GM18951 (cell line): ENCODE measurements at regions of chr15 and their contacts with region 1.

Region 1: GRCh38 chr15:52466134-52466701 is 62.5 kb downstream of the MYO5A start:
- POLR2A ChIP-seq: peak; percentile 48

Region 2: DNA sequence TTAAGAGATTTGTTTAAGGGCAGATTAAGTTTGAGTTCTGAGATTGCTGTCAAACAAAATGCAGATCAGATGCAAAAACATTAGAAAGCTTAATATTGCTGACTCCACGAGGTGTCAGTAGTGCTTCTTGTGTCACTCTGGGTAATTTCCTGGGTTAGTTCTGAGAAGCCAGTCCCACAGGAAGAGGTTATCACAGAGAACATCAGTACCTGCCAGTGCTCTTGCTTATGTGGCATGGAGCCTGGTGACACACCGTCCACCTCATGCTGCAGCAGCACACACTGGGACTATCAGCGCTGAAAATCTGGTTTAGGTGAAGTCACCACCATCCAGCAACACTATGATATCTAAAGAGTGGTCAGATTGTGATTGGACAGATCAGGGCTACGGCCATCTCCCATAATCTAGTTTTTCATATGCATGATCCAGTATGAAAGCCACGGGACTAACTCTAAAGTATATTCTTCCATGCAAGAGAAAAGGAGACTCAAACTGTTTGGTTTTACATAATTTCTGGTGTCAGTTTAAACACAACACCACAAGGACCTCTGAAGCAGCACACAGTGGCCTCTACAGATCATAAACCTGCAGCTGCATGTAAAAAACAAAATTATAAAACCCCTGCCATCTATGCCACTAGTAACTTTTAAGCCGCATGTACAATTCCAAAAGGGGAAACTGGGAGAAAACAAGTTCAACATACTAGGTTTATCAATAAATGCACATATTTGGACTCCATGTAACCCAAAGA is 134.6 kb before region 1 on chr15:
- in situ Hi-C with region 1: loop called (anchors 10 kb)
- POLR2A ChIP-seq: peak; percentile 33